ENCODE measurements at regions of chr22 and their contacts with region 1.

Region 1: GRCh38 chr22:36454916-36455570 is 26.4 kb downstream of the TXN2 start:
- DNase-seq: peak; percentile 97
- H3K4me3 Mint-ChIP-seq: peak overlapping the region; percentile 72
- H3K27ac Mint-ChIP-seq: peak overlapping the region; percentile 95
- H3K4me1 Mint-ChIP-seq: peaks cover 61% of the 10 kb centered on the region
- H3K27me3 Mint-ChIP-seq: no peaks in the 10 kb centered on the region

Region 2: GRCh38 chr22:36405671-36406538 is 49.1 kb before region 1 on chr22:
- CTCF ChIA-PET with region 1: interaction called, 8 read pairs
- POLR2A ChIA-PET with region 1: interaction called, 16 read pairs
- DNase-seq: peak; percentile 80
- H3K4me3 Mint-ChIP-seq: peak overlapping the region; percentile 22
- H3K27ac Mint-ChIP-seq: peak overlapping the region; percentile 99
- H3K4me1 Mint-ChIP-seq: peaks cover 68% of the 10 kb centered on the region
- H3K27me3 Mint-ChIP-seq: no peaks in the 10 kb centered on the region

Region 3: GRCh38 chr22:36435516-36436415 is 19.3 kb before region 1 on chr22:
- CTCF ChIA-PET with region 1: interaction called, 10 read pairs
- POLR2A ChIA-PET with region 1: interaction called, 3 read pairs
- DNase-seq: peak; percentile 53
- H3K4me3 Mint-ChIP-seq: peak overlapping the region; percentile 11
- H3K27ac Mint-ChIP-seq: peak overlapping the region; percentile 74
- H3K4me1 Mint-ChIP-seq: peaks cover 36% of the 10 kb centered on the region
- H3K27me3 Mint-ChIP-seq: no peaks in the 10 kb centered on the region

Region 4: GRCh38 chr22:36481393-36482168 is 26.5 kb after region 1 on chr22 and contains the start of gene TXN2:
- CTCF ChIA-PET with region 1: interaction called, 7 read pairs
- POLR2A ChIA-PET with region 1: interaction called, 10 read pairs
- DNase-seq: peak; percentile 96
- H3K4me3 Mint-ChIP-seq: peak within 1 kb of the TSS; percentile 100
- H3K27ac Mint-ChIP-seq: peak within 1 kb of the TSS; percentile 96
- H3K4me1 Mint-ChIP-seq: peaks cover 20% of the 10 kb centered on the region
- H3K27me3 Mint-ChIP-seq: no peaks in the 10 kb centered on the region
- total RNA-seq, gene TXN2: 72.3 to 73.2 TPM

Measured in activated CD4-positive, alpha-beta memory T cell treated with anti-CD3 and anti-CD28 coated beads, Interleukin-2, amount 10 ng/mL, durations not matched to agents 7 days and 5 days (primary cell).